Gastrocnemius medialis (tissue), 4 donors: ENCODE measurements at regions of chr20 and their contacts with region 1.

Region 1: DNA sequence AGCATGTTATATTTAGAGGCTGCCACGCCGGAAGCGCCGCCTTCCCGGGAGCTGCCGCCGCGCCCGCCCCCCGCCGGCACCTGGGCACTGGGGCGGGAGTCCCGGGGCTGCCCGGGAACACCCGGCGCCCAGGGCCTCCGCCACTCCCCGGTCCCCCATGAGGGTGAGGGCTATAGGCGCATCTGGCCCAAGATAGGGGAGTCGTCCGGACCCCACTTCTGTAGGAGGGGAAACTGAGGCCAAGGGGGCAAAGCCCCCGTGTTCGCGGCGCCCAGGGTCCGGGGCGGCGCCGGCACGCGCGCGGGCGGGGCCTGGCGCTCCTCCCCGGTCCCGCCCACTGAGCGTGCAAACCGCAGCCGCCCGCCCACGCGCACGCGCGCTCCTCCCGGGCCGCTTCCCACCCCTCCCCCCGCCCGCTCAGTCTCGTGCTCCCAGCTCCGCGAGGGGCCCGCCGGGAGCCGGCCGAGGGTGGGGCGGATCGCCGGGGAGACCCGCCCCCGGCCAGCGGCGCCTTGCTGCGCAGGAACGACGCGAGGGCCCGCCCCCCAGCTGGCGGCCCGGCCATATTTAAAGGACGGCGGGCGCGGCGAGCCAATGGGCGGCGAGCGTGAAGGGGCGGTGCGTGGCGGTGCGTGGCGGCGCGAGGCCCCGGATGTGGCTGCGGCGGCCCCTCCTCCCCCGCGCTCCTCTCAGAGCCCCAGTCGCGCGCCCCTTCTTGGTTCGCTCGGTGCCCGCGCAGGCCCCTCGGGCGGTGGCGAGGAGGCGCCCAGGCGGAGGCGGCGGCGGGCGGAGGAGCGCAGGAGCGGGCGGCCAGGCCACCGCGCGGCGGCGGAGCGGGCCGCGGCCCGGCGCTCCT is at the start of gene LSM14B:
- DNase-seq: peak; percentile 92 to 96
- ATAC-seq: peak; percentile 68 to 71
- H3K4me3 ChIP-seq: peak within 1 kb of the TSS; percentile 69 to 86 (median 74)
- H3K27ac ChIP-seq: peak within 1 kb of the TSS; percentile 95 to 98 (median 96)
- H3K4me1 ChIP-seq: peaks cover 45 to 56% of the 10 kb centered on the region in 2 donors
- H3K27me3 ChIP-seq: no peaks in the 10 kb centered on the region
- CTCF ChIP-seq: peak in 1 of 5 experiments; percentile 21
- POLR2A ChIP-seq: peak; percentile 83 to 86
- total RNA-seq, gene LSM14B: 28.0 to 52.5 (median 36.2) TPM

Region 2: GRCh38 chr20:62010551-62011402 is 111.2 kb before region 1 on chr20:
- in situ Hi-C with region 1: loop called in 2 of 4 experiments (anchors 25 kb)
- intact Hi-C with region 1: loop called (anchors 2 kb)
- DNase-seq: peak in 1 of 2 donors; percentile 40
- ATAC-seq: peak in 1 of 2 donors; percentile 67
- H3K4me3 ChIP-seq: no peak overlapping the region
- H3K27ac ChIP-seq: no peak overlapping the region
- H3K4me1 ChIP-seq: peaks cover 0 to 5% of the 10 kb centered on the region in 2 donors
- H3K27me3 ChIP-seq: no peaks in the 10 kb centered on the region
- CTCF ChIP-seq: peak; percentile 57 to 67 (median 60)
- POLR2A ChIP-seq: no peak

Region 3: GRCh38 chr20:62065669-62066338 is 56.2 kb before region 1 on chr20 and contains the start of gene TAF4:
- in situ Hi-C with region 1: loop called in 1 of 4 experiments (anchors 10 kb)
- intact Hi-C with region 1: loop called (anchors 1 kb)
- DNase-seq: peak; percentile 58 to 68
- ATAC-seq: peak; percentile 74 to 77
- H3K4me3 ChIP-seq: peak within 1 kb of the TSS; percentile 62 to 76 (median 72)
- H3K27ac ChIP-seq: peak within 1 kb of the TSS; percentile 82 to 89 (median 86)
- H3K4me1 ChIP-seq: peaks cover 48 to 49% of the 10 kb centered on the region in 2 donors
- H3K27me3 ChIP-seq: no peaks in the 10 kb centered on the region
- CTCF ChIP-seq: no peak
- POLR2A ChIP-seq: peak; percentile 86 to 90
- total RNA-seq, gene TAF4: 8.0 to 24.9 (median 13.9) TPM

Region 4: DNA sequence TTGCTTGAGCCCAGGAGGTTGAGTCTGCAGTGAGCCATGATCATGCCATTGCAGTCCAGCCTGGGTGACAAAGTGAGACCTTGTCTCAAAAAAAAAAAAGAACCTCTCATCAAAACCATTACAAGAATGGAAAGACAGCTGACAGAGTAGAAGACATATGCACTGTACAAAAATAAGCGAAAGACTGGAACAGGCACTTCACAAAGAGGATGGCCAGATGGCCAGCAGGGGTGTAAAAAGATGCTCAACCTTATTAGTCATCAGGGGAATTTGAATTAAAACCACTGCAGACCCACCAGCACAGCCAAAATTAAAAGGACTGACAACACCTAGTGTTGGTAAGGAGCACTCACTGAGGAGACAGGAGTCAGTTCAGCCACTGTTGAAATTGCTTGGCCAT is 42.8 kb before region 1 on chr20:
- in situ Hi-C with region 1: loop called in 1 of 4 experiments (anchors 5 kb)
- intact Hi-C with region 1: no loop called
- DNase-seq: no peak
- ATAC-seq: no peak
- H3K4me3 ChIP-seq: no peak overlapping the region
- H3K27ac ChIP-seq: no peak overlapping the region
- H3K4me1 ChIP-seq: peaks cover 3 to 7% of the 10 kb centered on the region in 2 donors
- H3K27me3 ChIP-seq: no peaks in the 10 kb centered on the region
- CTCF ChIP-seq: no peak
- POLR2A ChIP-seq: no peak

Region 5: DNA sequence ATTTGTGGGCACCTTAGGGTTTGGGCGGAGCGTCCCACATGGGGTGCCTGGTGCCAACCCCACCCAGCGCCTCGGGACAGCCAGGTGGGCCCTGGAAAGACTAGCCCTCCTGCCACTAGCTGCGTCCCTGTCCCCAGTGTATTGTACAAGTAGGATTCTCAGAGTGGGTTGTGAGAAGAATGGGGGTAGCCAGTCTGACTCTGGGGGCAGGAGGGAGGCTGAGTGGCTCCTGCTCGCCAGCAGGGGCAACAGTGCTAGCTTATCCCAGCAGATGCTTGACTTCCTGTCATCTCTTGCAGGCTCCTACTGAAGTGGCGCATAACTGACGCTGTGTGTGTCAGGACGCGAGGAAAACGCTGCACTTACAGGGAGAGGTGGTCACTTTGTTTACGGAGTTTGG is 11.9 kb after region 1 on chr20:
- in situ Hi-C with region 1: no loop called
- intact Hi-C with region 1: loop called (anchors 1 kb)
- DNase-seq: no peak
- ATAC-seq: no peak
- H3K4me3 ChIP-seq: no peak overlapping the region
- H3K27ac ChIP-seq: peak overlapping the region; percentile 54 to 96 (median 93)
- H3K4me1 ChIP-seq: peaks cover 20 to 28% of the 10 kb centered on the region in 2 donors
- H3K27me3 ChIP-seq: no peaks in the 10 kb centered on the region
- CTCF ChIP-seq: peak in 2 of 5 experiments; percentile 11 to 19
- POLR2A ChIP-seq: no peak

Region 6: DNA sequence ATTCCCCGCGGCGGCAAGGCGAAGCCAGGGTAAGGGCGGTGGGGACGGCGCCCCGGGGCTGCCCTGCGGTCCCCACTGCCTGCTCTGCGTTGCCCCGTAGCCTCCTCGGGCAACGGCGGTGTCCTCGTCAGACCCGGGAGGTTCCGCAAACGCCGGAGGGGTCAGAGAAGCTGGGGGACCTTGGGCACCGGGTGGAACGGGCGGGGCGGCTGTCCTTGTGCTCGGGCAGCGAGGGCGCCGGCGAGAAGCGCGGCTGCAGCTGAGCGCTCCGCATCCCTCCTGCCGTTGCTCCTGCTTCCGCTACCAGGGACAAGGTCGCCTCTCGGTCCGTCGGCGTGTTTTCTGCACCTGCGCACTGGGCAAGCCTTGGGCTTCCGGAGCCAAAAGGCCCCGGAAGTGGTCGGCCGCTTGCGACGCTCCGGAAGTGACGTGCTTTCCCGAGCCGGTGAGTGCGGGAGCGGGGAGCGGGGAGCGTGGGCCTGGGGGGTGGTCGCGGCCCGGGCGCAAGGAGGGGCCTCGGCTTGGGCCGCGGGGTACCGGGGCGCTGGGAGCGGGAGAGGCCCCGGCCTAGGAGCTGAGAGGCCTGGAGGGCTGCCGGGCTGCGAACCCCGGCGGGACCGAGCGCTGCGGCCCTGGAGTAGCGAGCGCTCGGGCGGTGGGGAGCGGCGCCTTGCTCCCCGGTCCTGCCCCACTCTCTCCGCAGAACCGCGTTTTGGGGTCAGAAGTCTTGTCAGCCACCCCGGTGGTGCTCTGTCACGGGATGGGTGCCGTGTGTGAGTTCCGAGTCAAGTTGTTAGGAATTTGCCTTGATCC is 60.8 kb after region 1 on chr20 and contains the start of gene MTG2:
- in situ Hi-C with region 1: no loop called
- intact Hi-C with region 1: loop called (anchors 2 kb)
- DNase-seq: peak; percentile 92 to 94
- ATAC-seq: peak; percentile 98
- H3K4me3 ChIP-seq: peak within 1 kb of the TSS; percentile 77 to 99 (median 84)
- H3K27ac ChIP-seq: peak within 1 kb of the TSS; percentile 87 to 97 (median 90)
- H3K4me1 ChIP-seq: peaks cover 16 to 20% of the 10 kb centered on the region in 2 donors
- H3K27me3 ChIP-seq: no peaks in the 10 kb centered on the region
- CTCF ChIP-seq: peak in 3 of 5 experiments; percentile 14 to 25 (median 15)
- POLR2A ChIP-seq: peak; percentile 89 to 93
- total RNA-seq, gene MTG2: 21.0 to 50.8 (median 29.3) TPM

Region 7: DNA sequence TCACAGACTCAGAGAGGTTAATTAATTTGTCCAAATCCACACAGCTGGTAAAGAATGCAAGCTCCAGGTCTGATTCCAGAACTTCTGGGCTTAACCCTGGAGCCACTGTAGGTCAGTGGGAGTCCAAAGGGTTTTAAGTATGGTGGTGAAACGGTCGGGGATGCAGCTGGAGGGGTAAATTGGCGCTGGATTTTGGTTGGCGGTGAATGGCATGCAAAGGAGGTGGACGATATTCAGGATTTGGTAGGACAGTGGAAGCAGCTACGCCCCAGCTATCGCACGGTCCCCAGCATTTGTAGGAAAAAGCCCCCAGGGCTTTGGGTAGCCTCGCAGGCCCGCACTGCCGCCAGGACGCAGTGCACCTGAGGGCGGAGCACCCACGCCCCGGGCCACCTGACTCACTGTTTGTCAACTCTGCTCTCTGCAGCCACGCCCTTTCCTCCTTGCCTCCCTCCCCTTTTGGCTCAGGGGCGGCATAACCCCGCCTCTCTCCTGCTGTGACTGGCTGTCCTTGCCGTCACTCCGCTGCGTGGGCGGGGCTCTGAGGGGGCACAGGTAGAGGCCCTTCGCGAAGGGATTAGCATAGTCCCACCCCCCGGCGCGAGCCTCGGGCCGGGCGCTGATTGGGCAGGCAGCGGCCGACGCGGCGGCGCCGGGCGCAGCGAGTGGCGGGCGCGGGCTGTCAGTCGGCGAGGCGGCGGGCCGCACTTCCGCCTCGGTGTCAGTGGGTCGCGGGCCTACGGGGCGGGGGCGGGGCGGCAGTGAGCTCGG is 116.0 kb after region 1 on chr20 and contains the start of gene OSBPL2:
- in situ Hi-C with region 1: no loop called
- intact Hi-C with region 1: loop called (anchors 1 kb)
- DNase-seq: peak; percentile 99
- ATAC-seq: peak; percentile 90
- H3K4me3 ChIP-seq: peak within 1 kb of the TSS; percentile 63 to 86 (median 74)
- H3K27ac ChIP-seq: peak within 1 kb of the TSS; percentile 87 to 96 (median 92)
- H3K4me1 ChIP-seq: peaks cover 42 to 57% of the 10 kb centered on the region in 2 donors
- H3K27me3 ChIP-seq: no peaks in the 10 kb centered on the region
- CTCF ChIP-seq: no peak
- POLR2A ChIP-seq: peak; percentile 80 to 84
- total RNA-seq, gene OSBPL2: 15.8 to 26.4 (median 19.6) TPM